Activated naive CD4-positive, alpha-beta T cell treated with anti-CD3 and anti-CD28 coated beads for 36 hours (primary cell): ENCODE measurements at regions of chr10 and their contacts with region 1.

Region 1: DNA sequence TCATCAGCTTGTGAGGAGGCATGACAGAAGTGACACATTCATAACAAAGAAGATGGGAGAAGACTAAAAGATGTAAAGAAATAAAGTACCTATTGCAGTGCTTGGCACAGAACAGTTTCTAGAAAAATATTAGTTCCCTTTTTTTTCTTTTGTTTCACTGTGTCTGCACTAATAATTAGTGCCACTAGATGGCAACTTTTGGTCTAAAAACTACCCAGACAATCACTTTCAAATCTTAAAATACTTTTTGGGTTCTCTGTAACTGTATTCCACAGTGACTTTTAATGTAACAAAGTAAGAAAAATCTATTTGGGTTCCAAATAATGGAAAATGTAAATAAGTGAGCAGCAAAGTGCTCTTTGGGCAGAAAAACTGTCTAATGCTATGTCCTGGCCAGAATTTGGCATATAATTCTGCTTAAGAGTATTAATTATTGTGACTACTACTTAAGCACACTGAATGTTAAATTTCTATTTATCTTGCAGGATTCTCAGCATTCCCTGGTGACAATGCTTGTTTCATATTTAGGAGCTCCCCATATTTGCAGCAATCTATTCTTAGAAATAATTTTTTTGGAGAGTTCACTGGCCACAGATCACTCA is 134.8 kb upstream of the KIF5B start:
- DNase-seq: no peak
- H3K4me3 Mint-ChIP-seq: no peak overlapping the region
- H3K27ac Mint-ChIP-seq: no peak overlapping the region
- H3K4me1 Mint-ChIP-seq: peaks cover 2% of the 10 kb centered on the region
- H3K27me3 Mint-ChIP-seq: no peaks in the 10 kb centered on the region

Region 2: DNA sequence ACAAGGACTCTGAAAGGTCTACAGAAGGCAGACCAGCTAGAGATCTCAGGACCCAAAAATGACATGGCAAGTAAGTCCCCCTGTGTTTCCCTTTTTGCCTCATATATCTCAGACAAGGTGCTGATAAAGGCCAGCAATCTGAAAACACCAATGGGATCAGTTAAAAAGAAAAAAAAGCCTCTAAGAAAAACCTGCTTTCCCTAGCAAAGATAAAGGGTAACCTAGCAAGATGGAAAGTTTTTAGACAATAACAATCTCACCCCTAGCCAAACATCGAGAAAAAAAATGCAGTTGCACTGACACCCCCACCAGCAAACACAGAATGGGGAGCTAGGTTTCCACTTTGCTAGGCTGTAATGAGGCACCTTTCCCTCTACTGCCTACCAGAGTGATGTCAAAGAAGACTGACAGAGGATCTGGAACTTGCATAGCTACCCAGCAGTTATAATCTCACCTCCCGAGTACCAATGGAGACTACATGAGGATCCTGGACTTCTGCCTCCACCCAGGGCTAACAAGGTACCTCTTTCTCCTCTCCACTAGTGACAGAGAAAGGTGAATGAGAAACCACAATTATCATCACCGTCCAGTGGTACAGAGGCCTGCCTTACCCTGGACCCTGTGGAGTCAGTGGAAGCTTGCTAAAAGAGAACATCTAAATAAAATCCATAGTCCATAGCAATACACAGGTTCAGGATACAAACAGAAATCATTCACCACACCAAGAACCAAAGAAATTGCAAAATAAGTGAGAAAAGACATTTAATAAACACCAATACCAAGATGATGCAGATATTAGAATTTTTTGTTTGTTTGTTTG is 503.1 kb before region 1 on chr10:
- CTCF ChIA-PET with region 1: no interaction called
- intact Hi-C with region 1: no loop called
- DNase-seq: no peak
- H3K4me3 Mint-ChIP-seq: no peak overlapping the region
- H3K27ac Mint-ChIP-seq: no peak overlapping the region
- H3K4me1 Mint-ChIP-seq: no peaks in the 10 kb centered on the region
- H3K27me3 Mint-ChIP-seq: peaks cover 5% of the 10 kb centered on the region

Region 3: GRCh38 chr10:32207544-32207943 is 16.6 kb after region 1 on chr10:
- CTCF ChIA-PET with region 1: interaction called, 11 read pairs
- intact Hi-C with region 1: loop called (anchors 1 kb)
- DNase-seq: peak; percentile 74
- H3K4me3 Mint-ChIP-seq: no peak overlapping the region
- H3K27ac Mint-ChIP-seq: no peak overlapping the region
- H3K4me1 Mint-ChIP-seq: peaks cover 3% of the 10 kb centered on the region
- H3K27me3 Mint-ChIP-seq: peaks cover 2% of the 10 kb centered on the region

Region 4: DNA sequence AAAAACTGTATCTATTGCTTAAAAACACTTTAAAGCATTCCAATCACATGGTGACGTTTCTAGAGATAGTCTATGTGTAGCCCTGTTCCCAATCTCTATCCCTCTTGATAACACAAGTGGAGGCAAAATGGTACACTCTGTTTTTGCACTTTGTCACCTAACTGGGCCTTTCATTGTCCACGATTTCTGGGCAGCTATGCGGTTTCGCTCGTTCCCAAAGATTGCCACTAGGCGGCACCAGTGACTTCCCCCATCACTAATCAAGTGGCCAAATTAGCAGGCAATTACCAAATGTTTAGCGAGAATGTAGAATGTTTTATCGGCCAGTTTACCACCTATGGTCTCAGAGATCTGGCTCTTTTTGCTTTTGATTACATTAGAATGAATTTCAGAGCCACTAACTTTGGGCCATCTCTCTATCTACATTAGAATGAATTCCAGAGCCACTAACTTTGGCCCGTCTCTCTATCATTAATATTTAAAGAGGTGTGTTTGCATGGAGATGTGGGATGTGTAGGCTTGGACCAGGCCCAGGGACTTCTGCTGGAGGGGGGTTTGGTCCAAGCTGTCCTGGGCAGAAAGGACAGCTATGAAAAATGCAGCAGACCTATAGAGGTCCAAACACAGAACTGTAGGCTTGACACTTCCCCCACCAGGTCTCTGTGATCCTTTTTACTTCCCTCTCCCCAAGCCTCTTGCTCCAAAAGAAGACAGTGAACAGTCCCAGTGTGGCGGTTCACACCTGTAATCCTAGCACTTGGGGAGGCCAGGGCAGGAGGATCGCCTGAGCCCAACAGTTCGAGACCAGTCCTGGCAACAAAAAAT is 65.8 kb after region 1 on chr10:
- CTCF ChIA-PET with region 1: interaction called, 6 read pairs
- intact Hi-C with region 1: loop called (anchors 1 kb)
- DNase-seq: peak; percentile 81
- H3K4me3 Mint-ChIP-seq: no peak overlapping the region
- H3K27ac Mint-ChIP-seq: no peak overlapping the region
- H3K4me1 Mint-ChIP-seq: peaks cover 8% of the 10 kb centered on the region
- H3K27me3 Mint-ChIP-seq: no peaks in the 10 kb centered on the region

Region 5: DNA sequence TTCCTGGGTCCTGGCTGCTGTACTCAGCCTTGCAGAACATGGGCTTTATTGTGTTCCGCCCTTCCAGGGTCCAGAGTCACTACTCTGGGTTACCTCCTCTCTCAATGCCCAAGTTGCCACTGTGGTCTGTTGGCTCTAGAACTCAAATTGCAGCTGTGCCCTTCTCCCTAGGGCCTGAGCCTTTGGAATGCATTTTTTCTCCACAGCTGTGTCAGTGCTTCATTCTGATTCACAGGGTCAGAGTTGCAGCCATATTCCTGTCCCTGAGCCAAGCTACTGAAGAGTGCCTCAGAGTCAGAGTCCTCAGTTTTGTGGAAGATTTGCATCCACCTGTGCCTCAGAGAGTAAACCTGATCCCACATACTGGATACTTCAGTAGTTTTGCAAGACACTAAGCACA is 599.5 kb after region 1 on chr10:
- CTCF ChIA-PET with region 1: no interaction called
- intact Hi-C with region 1: loop called (anchors 5 kb)
- DNase-seq: no peak
- H3K4me3 Mint-ChIP-seq: no peak overlapping the region
- H3K27ac Mint-ChIP-seq: no peak overlapping the region
- H3K4me1 Mint-ChIP-seq: no peaks in the 10 kb centered on the region
- H3K27me3 Mint-ChIP-seq: no peaks in the 10 kb centered on the region